ENCODE measurements at regions of chr1 and their contacts with region 1.

Region 1: DNA sequence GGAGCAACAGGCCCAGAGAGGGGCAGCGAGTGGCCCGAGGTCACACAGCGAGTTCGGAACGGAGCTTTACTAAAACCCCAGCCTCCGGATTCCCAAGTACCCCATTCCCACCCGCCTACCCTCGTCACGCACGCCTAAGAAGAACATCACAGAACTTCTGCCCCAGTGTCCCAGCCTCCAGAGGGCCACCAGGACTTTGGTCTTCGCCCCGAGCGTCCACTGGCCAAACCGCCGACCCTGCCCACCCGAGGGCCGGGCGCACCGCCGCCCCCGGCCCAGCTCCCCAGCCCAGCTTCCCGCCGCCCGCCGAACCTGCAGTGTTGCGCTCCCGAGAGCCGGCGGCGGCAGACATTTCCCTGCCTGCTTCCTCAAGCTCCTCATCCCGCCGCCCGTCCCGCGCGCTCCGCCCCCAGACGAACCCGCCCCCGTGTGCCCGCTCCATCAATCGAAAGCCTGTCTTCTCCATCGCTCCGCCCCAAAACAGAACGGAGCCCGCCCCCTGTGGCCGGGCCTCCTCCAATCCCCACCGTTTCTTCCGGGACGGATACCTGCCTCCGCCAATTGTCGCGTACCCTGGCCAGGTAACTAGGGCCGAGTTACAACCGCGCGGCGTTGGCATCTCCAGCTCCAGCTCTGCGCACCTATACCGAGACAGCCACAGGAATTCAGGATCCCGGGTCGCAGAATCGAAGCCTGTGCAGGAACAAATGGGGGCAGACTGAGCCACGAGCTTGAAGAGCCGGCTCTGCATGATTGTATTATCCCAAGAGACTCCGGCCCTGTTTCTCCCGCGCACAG is 15.3 kb downstream of the INPP5B start:
- DNase-seq: peak; percentile 96
- H3K4me3 Mint-ChIP-seq: peak overlapping the region; percentile 95
- H3K27ac Mint-ChIP-seq: peak overlapping the region; percentile 81
- H3K4me1 Mint-ChIP-seq: peaks cover 28% of the 10 kb centered on the region
- H3K27me3 Mint-ChIP-seq: no peaks in the 10 kb centered on the region

Region 2: DNA sequence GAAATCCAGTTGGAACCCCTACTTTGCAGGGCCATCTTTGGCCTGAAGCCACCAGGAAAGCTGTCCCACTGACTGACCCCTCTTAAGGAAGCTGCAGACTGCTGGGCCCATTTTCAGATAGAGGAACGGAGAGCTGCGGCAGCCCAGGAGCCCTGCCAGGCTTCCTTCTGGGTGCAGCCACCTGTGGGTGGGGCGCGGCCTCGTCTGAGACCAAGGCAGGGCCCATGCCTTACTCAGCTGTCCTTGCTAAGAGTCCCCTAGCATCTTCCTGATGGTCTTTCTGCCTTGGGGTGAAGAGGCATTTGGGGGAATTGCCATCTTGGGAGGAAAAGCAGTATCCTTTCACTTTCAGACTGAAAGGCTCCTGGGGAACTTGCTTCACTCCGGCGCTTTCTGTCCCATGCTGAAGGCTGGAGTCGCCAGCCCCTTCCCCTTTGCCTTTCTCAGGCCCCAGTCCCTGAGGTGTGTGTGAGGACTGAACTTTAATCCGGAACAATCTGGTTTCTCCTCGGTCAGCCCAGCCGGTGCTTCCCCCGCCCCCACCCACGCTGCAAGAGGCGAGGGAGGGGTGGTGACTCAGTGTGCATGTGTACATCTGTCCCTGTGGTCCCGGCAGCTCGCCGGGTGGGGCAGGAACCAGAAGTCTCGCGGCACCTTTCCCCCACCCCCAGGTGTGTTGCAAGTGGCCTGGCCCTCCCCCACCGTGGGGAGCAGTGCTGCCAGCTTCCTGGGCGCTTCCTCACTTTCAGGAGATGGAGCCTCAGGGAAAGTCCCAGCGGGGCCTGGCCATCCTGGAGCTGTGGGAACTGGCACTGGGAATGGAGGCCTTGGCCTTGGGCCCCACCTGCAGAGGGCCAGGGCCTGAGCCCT is 452.1 kb before region 1 on chr1:
- intact Hi-C with region 1: loop called (anchors 1 kb)
- DNase-seq: peak; percentile 84
- H3K4me3 Mint-ChIP-seq: peak overlapping the region; percentile 100
- H3K27ac Mint-ChIP-seq: peak overlapping the region; percentile 97
- H3K4me1 Mint-ChIP-seq: peaks cover 42% of the 10 kb centered on the region
- H3K27me3 Mint-ChIP-seq: peaks cover 2% of the 10 kb centered on the region

Region 3: GRCh38 chr1:37946703-37947360 is 15.3 kb after region 1 on chr1 and contains the start of gene INPP5B:
- intact Hi-C with region 1: loop called (anchors 1 kb)
- DNase-seq: peak; percentile 78
- H3K4me3 Mint-ChIP-seq: peak within 1 kb of the TSS; percentile 91
- H3K27ac Mint-ChIP-seq: peak within 1 kb of the TSS; percentile 96
- H3K4me1 Mint-ChIP-seq: peaks cover 19% of the 10 kb centered on the region
- H3K27me3 Mint-ChIP-seq: no peaks in the 10 kb centered on the region
- total RNA-seq, gene INPP5B: 23.6 and 27.2 TPM in 2 replicates

Region 4: DNA sequence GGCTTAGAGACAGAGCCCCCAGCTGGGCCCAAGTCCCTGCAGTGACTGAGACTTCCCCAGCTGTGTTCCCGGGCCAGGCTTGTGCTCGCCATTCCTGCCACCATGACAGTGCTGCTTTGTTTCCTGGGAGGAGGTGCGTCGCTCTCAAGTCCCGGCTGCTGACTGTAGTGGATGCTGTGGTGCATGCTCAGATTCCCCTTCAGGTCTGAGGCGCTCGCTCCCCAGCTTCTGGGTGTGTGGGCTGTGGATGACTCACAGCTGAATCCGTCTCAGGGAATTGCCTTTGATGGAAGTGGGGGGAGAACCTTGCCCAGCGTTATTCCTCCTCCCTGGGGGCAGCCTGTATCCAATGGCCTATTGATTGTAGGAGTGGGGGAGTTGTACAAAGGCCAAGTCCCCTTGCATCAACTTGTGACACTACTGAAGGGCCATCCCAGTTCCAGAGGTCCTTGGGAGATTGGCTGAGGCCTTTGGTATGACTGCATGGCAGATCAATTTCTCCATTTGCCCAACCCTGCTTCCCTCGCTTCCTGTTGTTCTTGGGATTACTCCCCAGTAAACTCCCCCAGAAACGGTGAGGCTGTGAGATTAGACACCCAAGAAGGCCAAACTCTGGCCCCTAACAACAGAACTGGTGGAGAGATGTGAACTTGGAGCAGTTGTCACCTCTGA is 132.8 kb after region 1 on chr1:
- intact Hi-C with region 1: no loop called
- DNase-seq: no peak
- H3K4me3 Mint-ChIP-seq: no peak overlapping the region
- H3K27ac Mint-ChIP-seq: no peak overlapping the region
- H3K4me1 Mint-ChIP-seq: no peaks in the 10 kb centered on the region
- H3K27me3 Mint-ChIP-seq: peaks cover 11% of the 10 kb centered on the region

Measured in activated T-helper 1 cell treated with anti-CD3 and anti-CD28 coated beads, Interleukin-12 subunit alpha, Interleukin-12 subunit beta, Interleukin-2, Interleukin-4 antibody, amounts not matched to agents 30 ng/mL and 10 ng/mL and 1 ng/mL, durations not matched to agents 14 hours and 24 hours and 36 hours (primary cell).